ENCODE measurements at regions of chr16 and their contacts with region 1.

Region 1: DNA sequence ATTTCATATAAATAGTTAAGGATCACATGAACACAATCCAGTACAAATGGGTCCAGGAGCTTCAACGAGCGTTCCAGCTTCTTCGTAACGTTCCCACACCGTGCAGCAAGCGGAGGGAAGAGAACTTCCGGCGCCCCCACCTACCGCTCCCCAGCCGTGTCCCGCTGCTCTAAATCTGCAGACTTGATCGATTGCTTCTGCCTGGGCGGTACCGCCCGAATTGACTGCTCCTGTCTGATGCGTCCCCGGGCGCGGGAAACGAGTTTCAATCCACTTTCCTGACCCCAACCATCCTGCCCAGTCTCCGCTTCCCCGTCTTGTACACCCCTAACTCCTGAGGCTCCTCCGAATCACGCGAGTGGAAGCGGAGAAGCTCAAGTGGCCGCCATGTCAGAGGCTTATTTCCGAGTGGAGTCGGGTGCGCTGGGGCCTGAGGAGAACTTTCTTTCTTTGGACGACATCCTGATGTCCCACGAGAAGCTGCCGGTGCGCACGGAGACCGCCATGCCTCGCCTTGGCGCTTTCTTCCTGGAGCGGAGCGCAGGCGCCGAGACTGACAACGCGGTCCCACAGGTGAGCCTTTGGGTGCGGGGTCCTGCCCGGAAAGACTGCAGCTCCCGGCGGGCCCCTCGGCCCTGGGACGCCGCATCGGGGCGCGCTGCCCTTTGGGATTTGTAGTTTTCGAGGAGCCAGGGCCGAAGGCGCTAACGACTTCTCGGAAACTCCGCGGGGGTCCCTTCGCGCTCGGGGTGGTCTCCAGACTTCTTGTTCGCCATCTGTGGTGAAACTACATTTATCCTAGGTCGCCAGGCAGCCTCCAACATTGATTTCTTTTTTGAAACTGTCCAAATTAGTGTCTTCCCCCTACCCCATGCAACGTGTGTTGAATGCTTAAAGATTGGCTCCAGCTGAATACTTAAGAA is at the start of gene GINS3:
- DNase-seq: peak; percentile 77
- ATAC-seq: peak; percentile 97
- H3K4me3 Mint-ChIP-seq: peak within 1 kb of the TSS; percentile 100
- H3K27ac Mint-ChIP-seq: peak within 1 kb of the TSS; percentile 97
- H3K4me1 Mint-ChIP-seq: peaks cover 15% of the 10 kb centered on the region
- H3K27me3 Mint-ChIP-seq: peaks cover 3% of the 10 kb centered on the region
- CTCF ChIP-seq: no peak
- total RNA-seq, gene GINS3: 5.3 and 6.9 TPM in 2 replicates

Region 2: DNA sequence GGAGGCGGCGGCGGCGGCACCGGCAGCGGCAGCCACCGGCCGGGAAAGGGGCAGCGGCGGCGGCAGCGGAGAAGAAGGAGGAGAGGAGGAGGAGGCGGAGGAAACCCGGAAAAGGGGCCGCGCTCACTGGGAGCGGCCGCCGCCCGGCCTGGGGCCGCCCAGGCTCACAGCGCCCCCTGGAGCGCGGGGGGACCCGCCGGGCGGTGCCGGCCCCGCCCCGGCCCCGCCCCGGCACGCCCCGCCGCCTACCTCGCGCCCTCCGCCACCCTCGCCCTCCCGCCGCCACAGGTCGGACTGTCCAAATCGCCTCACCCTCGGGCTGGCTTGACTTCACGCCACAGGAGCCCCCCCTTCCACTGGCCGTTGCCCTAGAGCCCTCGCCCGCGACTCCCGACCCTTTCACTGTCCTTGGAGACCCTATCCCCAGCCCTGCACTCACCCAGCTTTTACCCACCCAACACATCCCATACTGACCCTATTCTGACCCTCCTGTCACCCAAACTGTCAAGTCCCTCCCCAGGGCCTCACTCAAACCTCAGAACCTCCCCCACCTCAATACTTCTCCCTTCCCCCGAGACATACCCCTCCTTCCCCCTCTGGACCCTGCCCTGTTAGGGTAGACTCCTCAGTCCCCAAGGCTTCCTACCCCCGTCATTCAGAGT is 194.3 kb before region 1 on chr16 and contains the start of gene CSNK2A2:
- CTCF ChIA-PET with region 1: no interaction called
- POLR2A ChIA-PET with region 1: no interaction called
- intact Hi-C with region 1: loop called (anchors 1 kb)
- DNase-seq: peak; percentile 73
- ATAC-seq: peak; percentile 94
- H3K4me3 Mint-ChIP-seq: peak within 1 kb of the TSS; percentile 87
- H3K27ac Mint-ChIP-seq: peak within 1 kb of the TSS; percentile 65
- H3K4me1 Mint-ChIP-seq: peaks cover 33% of the 10 kb centered on the region
- H3K27me3 Mint-ChIP-seq: no peaks in the 10 kb centered on the region
- CTCF ChIP-seq: no peak
- total RNA-seq, gene CSNK2A2: 77.3 and 85.5 TPM in 2 replicates

Region 3: GRCh38 chr16:58411742-58412614 is 19.5 kb after region 1 on chr16:
- CTCF ChIA-PET with region 1: no interaction called
- POLR2A ChIA-PET with region 1: interaction called, 3 read pairs
- intact Hi-C with region 1: loop called (anchors 2 kb)
- DNase-seq: no peak
- ATAC-seq: no peak
- H3K4me3 Mint-ChIP-seq: no peak overlapping the region
- H3K27ac Mint-ChIP-seq: no peak overlapping the region
- H3K4me1 Mint-ChIP-seq: peaks cover 16% of the 10 kb centered on the region
- H3K27me3 Mint-ChIP-seq: no peaks in the 10 kb centered on the region
- CTCF ChIP-seq: no peak

Region 4: GRCh38 chr16:58629572-58630104 is 237.2 kb after region 1 on chr16 and contains the start of gene CNOT1:
- CTCF ChIA-PET with region 1: no interaction called
- POLR2A ChIA-PET with region 1: interaction called, 8 read pairs
- intact Hi-C with region 1: loop called (anchors 1 kb)
- DNase-seq: peak; percentile 90
- ATAC-seq: peak; percentile 79
- H3K4me3 Mint-ChIP-seq: peak within 1 kb of the TSS; percentile 99
- H3K27ac Mint-ChIP-seq: peak within 1 kb of the TSS; percentile 100
- H3K4me1 Mint-ChIP-seq: peaks cover 35% of the 10 kb centered on the region
- H3K27me3 Mint-ChIP-seq: no peaks in the 10 kb centered on the region
- CTCF ChIP-seq: no peak
- total RNA-seq, gene CNOT1: 243 and 266 TPM in 2 replicates

Region 5: GRCh38 chr16:58733671-58734458 is 341.4 kb after region 1 on chr16 and contains the start of gene GOT2:
- CTCF ChIA-PET with region 1: no interaction called
- POLR2A ChIA-PET with region 1: no interaction called
- intact Hi-C with region 1: loop called (anchors 2 kb)
- DNase-seq: peak; percentile 77
- ATAC-seq: peak; percentile 95
- H3K4me3 Mint-ChIP-seq: peak within 1 kb of the TSS; percentile 98
- H3K27ac Mint-ChIP-seq: peak within 1 kb of the TSS; percentile 62
- H3K4me1 Mint-ChIP-seq: peaks cover 36% of the 10 kb centered on the region
- H3K27me3 Mint-ChIP-seq: no peaks in the 10 kb centered on the region
- CTCF ChIP-seq: no peak
- total RNA-seq, gene GOT2: 53.6 and 59.2 TPM in 2 replicates

Region 6: DNA sequence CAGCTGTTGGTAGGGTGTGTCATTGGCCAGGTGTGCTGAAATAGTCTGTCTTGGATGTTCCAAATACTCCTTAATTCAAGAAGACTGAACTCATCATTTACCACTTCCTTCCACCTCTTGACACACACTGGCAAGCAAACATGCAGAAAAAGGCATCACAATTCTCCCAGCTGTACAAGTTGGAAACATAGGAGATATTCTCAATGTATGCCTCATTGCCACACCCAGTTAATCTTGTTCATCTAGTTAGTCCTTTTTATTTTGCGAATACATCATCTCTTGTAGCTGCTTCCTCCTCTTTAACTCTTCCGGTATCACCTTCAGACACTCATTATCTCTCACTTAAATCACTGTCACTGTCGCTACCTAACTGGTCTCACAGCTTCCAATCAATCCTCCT is 416.7 kb after region 1 on chr16:
- CTCF ChIA-PET with region 1: no interaction called
- POLR2A ChIA-PET with region 1: no interaction called
- intact Hi-C with region 1: no loop called
- DNase-seq: no peak
- ATAC-seq: no peak
- H3K4me3 Mint-ChIP-seq: no peak overlapping the region
- H3K27ac Mint-ChIP-seq: no peak overlapping the region
- H3K4me1 Mint-ChIP-seq: peaks cover under 1% of the 10 kb centered on the region
- H3K27me3 Mint-ChIP-seq: peaks cover 2% of the 10 kb centered on the region
- CTCF ChIP-seq: no peak

Measured in activated B cell treated with CpG ODN at 0.5 μM for 24 hours (primary cell).